Activated CD4-positive, alpha-beta memory T cell treated with anti-CD3 and anti-CD28 coated beads, Interleukin-2, amount 10 ng/mL, durations not matched to agents 7 days and 5 days (primary cell): ENCODE measurements at regions of chr3 and their contacts with region 1.

Region 1: DNA sequence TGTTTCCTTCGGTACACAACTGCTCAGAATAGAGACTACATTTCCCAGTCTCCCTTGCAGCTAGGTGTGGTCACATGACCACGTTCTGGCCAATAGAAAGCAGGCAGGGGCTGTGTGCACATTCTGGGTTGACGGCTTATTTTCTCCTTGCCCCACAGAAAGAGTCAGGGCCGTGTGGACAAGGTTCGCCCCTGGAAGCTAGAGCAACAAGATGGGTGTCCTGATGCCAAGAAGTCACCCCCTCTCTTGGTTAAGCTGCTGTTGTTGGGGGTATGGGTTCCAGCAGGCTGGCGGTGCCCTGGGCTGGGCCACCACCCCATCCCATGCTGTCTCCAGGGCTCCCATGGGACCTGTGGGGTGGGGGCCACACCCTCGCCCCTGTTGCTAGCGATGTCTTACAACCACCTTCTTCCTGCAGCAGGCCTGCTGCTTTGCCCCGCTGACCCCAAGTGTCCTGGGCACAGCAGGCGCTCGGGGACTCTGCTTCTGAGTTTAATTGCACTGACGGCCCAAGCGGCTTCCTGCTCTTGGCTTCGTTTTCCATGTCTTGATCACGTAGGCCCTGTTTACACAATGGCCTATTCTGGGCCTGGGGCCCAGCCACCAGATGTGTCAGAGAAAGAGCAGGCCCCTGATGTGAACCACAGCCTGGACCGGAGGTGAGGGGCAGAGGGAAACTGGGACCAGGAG is 24.9 kb downstream of the ABTB1 start:
- DNase-seq: peak; percentile 66
- H3K4me3 Mint-ChIP-seq: no peak overlapping the region
- H3K27ac Mint-ChIP-seq: no peak overlapping the region
- H3K4me1 Mint-ChIP-seq: peaks cover 3% of the 10 kb centered on the region
- H3K27me3 Mint-ChIP-seq: no peaks in the 10 kb centered on the region

Region 2: DNA sequence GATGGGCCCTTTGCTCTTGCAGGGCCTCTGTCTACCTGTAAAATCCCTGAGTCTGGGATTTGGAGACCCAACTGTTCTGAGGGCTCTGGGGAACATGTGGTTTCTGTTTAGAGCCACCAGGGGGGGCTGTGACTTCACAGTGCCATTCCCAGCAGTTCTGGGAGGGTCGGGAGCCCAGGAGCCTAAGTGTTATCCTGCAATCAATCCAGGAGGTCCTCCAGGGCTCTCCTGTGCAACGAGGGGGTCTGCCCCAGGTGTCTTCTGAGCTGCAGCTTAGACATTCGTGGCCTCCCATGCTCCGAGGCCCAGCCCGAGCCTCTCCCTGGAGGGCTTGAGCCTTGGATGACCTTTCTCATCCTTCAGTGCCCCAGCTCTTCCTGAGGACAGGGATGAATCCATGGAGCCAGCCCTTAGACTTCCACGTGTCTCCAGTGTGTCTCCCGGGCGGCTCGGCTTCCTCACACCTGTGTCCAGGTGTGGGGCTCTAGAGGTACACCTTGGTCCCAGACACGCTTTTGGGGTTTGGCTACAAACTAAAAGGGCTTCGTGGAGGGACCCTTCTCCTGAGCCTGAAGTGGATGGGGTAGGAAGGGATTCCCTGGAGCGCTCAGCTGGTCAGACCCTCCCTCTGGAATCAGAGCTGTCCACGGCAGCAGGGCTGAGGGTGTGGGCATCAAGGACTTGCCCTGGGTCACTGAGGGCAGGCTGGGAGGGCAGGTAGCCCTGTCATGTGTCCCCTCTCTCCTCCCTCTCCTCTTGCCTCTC is 45.3 kb before region 1 on chr3:
- CTCF ChIA-PET with region 1: interaction called, 19 read pairs
- POLR2A ChIA-PET with region 1: no interaction called
- DNase-seq: no peak
- H3K4me3 Mint-ChIP-seq: no peak overlapping the region
- H3K27ac Mint-ChIP-seq: no peak overlapping the region
- H3K4me1 Mint-ChIP-seq: no peaks in the 10 kb centered on the region
- H3K27me3 Mint-ChIP-seq: peaks cover 3% of the 10 kb centered on the region

Region 3: DNA sequence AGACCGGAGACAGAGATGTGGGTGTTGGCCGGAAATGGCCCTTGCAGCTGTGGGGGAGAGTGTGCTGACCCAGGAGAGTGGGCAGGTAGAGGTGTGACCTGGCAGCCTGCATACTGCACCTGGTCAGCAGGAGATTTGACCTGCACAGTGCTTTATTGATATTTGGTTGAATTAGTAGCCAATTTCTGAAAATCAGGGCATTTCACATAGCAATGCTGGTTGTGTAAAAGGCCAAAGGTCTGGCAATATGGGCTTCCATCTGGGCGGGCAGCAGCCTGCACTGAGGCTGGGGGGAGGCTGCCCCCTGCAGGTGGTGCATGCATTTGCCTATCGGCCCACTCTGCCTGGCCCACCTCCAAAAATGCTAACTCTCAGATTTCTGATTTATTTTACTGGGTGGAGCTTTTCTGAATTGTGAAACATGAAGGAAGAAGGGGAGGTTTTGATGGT is 134.1 kb after region 1 on chr3:
- CTCF ChIA-PET with region 1: interaction called, 12 read pairs
- POLR2A ChIA-PET with region 1: no interaction called
- DNase-seq: peak; percentile 41
- H3K4me3 Mint-ChIP-seq: no peak overlapping the region
- H3K27ac Mint-ChIP-seq: no peak overlapping the region
- H3K4me1 Mint-ChIP-seq: no peaks in the 10 kb centered on the region
- H3K27me3 Mint-ChIP-seq: peaks cover 23% of the 10 kb centered on the region